ENCODE measurements at regions of chr14 and their contacts with region 1.

Region 1: GRCh38 chr14:100850841-100851585 is 25.1 kb downstream of the MEG3 start:
- DNase-seq: peak in 1 of 2 donors; percentile 54
- ATAC-seq: peak; percentile 39 to 74
- H3K4me3 ChIP-seq: no peak overlapping the region
- H3K27ac ChIP-seq: no peak overlapping the region
- H3K4me1 ChIP-seq: no peaks in the 10 kb centered on the region
- H3K27me3 ChIP-seq: no peaks in the 10 kb centered on the region
- CTCF ChIP-seq: peak; percentile 61 to 71 (median 65)
- POLR2A ChIP-seq: no peak

Region 2: DNA sequence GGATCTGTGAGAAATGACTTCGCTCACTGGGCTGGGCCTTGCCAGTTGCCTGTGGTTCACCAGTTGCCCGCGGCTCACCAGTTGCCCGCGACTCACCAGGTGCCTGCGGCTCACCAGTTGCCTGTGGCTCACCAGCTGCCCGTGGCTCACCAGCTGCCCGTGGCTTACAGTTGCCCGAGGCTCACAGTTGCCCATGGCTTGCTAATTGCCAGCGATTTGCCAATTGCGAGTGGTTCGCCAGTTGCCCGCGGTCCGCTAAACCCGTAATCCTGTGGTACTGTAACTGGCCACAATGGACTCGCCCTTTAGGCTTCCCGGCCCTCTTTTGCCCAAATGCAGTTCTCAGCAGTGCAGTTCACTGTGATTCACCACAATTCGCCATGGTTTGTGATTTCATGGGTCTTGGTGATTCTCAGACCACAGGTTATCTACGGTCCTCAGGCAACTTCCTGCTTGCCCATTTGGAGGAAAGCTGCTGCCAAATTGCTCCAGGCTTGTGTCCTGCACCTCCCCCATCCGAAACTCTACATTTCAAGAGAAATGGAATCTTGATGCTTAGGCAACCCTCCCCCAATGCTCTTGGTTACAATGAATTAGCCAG is 40.1 kb before region 1 on chr14:
- in situ Hi-C with region 1: no loop called
- intact Hi-C with region 1: no loop called
- DNase-seq: no peak
- ATAC-seq: no peak
- H3K4me3 ChIP-seq: no peak overlapping the region
- H3K27ac ChIP-seq: no peak overlapping the region
- H3K4me1 ChIP-seq: no peaks in the 10 kb centered on the region
- H3K27me3 ChIP-seq: peaks cover 4 to 10% (median 6%) of the 10 kb centered on the region in 3 donors
- CTCF ChIP-seq: no peak
- POLR2A ChIP-seq: no peak

Region 3: DNA sequence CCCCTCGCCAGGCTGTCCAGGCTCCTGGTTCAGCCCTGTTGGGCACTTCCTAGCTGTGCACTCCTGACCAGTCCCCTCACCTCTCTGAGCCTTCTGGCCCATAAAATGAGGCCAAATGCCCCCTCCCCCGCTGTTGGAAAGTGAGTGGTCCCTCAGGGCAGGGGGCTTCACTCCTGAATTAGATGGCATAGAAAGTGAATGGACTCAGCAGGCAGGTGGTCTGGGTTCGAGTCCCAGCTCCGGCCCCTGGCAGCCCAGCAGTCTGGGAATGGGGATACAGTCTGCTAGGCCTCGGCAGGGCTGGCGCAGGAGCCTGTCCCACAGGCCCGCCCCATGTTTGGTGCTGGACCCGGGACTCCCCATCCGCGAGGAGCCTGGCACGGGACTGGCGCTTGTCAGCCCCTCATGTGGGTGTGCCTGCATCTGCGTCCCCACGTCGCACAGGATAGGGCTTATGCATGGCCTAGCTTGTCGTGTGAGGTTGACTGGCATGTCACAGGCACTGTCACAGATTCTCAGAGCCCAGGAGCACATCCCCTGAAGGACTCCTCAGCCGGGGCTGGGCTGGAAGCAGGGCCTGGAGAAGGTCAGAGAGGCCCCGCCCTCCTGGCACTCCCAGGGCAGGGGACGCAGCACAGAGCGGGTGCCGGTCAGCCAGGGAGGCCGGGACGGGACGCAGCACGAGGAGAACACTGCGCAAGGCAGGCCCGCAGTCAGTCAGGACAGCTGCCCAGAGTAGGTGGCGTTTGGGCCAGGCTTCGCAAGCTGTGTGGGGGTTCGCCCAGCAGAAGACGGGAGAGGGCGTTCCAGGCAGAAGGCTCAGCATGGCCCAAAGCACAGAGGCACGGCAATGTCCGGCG is 750.8 kb after region 1 on chr14:
- in situ Hi-C with region 1: loop called in 1 of 4 experiments (anchors 25 kb)
- intact Hi-C with region 1: no loop called
- DNase-seq: peak in 1 of 2 donors; percentile 1
- ATAC-seq: no peak
- H3K4me3 ChIP-seq: no peak overlapping the region
- H3K27ac ChIP-seq: no peak overlapping the region
- H3K4me1 ChIP-seq: no peaks in the 10 kb centered on the region
- H3K27me3 ChIP-seq: peaks cover 0 to 3% (median 0%) of the 10 kb centered on the region in 3 donors
- CTCF ChIP-seq: no peak
- POLR2A ChIP-seq: no peak

Measured in gastrocnemius medialis (tissue), 4 donors.